Activated CD8-positive, alpha-beta T cell treated with anti-CD3 and anti-CD28 coated beads, Interleukin-2, amount 10 ng/mL, durations not matched to agents 7 days and 5 days (primary cell): ENCODE measurements at regions of chr12 and their contacts with region 1.

Region 1: GRCh38 chr12:92041742-92042141 is 103.9 kb downstream of the BTG1 start:
- DNase-seq: peak; percentile 45
- ATAC-seq: peak; percentile 59
- H3K4me3 Mint-ChIP-seq: no peak overlapping the region
- H3K27ac Mint-ChIP-seq: peak overlapping the region; percentile 74
- H3K4me1 Mint-ChIP-seq: peaks cover 57% of the 10 kb centered on the region
- H3K27me3 Mint-ChIP-seq: no peaks in the 10 kb centered on the region

Region 2: GRCh38 chr12:92030618-92031017 is 11.1 kb before region 1 on chr12:
- CTCF ChIA-PET with region 1: interaction called, 12 read pairs
- POLR2A ChIA-PET with region 1: interaction called, 7 read pairs
- DNase-seq: peak; percentile 79
- ATAC-seq: peak; percentile 98
- H3K4me3 Mint-ChIP-seq: peak overlapping the region; percentile 72
- H3K27ac Mint-ChIP-seq: peak overlapping the region; percentile 89
- H3K4me1 Mint-ChIP-seq: peaks cover 74% of the 10 kb centered on the region
- H3K27me3 Mint-ChIP-seq: no peaks in the 10 kb centered on the region

Region 3: GRCh38 chr12:92055864-92056263 is 14.1 kb after region 1 on chr12:
- CTCF ChIA-PET with region 1: interaction called, 14 read pairs
- POLR2A ChIA-PET with region 1: interaction called, 3 read pairs
- DNase-seq: peak; percentile 66
- ATAC-seq: peak; percentile 93
- H3K4me3 Mint-ChIP-seq: peak overlapping the region; percentile 16
- H3K27ac Mint-ChIP-seq: peak overlapping the region; percentile 76
- H3K4me1 Mint-ChIP-seq: peaks cover 51% of the 10 kb centered on the region
- H3K27me3 Mint-ChIP-seq: no peaks in the 10 kb centered on the region